GM12878 (cell line): ENCODE measurements at regions of chr18 and their contacts with region 1.

Region 1: GRCh38 chr18:50117863-50118262 is 77.1 kb downstream of the MYO5B start:
- DNase-seq: no peak
- ATAC-seq: no peak
- H3K4me3 ChIP-seq: no peak overlapping the region
- H3K27ac ChIP-seq: no peak overlapping the region
- H3K4me1 ChIP-seq: no peaks in the 10 kb centered on the region
- H3K27me3 ChIP-seq: peaks cover 0 to 4% of the 10 kb centered on the region in 2 experiments; a peak in 2 of 4 replicates
- CTCF ChIP-seq: no peak
- EP300 ChIP-seq: no peak
- POLR2A ChIP-seq: no peak
- RAD21 ChIP-seq: no peak

Region 2: DNA sequence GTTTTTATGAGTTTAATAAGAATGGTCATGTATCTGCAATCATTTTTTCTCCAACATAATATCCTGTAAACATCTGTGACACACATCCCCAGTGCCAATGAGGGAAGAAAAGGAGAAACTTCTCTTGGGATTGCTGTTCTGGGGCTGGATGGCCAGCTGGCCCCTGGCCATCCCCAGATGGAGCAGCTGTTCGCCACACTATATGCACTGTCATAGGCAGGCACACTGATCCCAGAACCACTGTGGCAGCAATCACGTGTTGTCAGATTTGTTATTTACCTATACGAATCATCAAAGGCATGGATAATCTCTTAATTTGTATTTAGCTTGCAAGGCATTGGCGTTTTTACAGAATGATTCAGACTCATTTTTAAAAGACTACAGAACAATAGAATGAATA is 137.0 kb before region 1 on chr18:
- CTCF ChIA-PET with region 1: no interaction called
- POLR2A ChIA-PET with region 1: no interaction called
- RAD21 ChIA-PET with region 1: no interaction called
- SMC1A ChIA-PET with region 1: no interaction called
- in situ Hi-C with region 1: no loop called
- intact Hi-C with region 1: no loop called
- DNase-seq: no peak
- ATAC-seq: no peak
- H3K4me3 ChIP-seq: no peak overlapping the region
- H3K27ac ChIP-seq: no peak overlapping the region
- H3K4me1 ChIP-seq: no peaks in the 10 kb centered on the region
- H3K27me3 ChIP-seq: peaks cover 4 to 7% of the 10 kb centered on the region in 2 experiments; a peak in 3 of 4 replicates
- CTCF ChIP-seq: no peak
- EP300 ChIP-seq: no peak
- POLR2A ChIP-seq: no peak
- RAD21 ChIP-seq: no peak

Region 3: GRCh38 chr18:50099725-50100407 is 18.0 kb before region 1 on chr18:
- CTCF ChIA-PET with region 1: interaction called, 5 read pairs
- POLR2A ChIA-PET with region 1: interaction called, 10 read pairs
- RAD21 ChIA-PET with region 1: interaction called, 5 read pairs
- SMC1A ChIA-PET with region 1: interaction called, 7 read pairs
- in situ Hi-C with region 1: no loop called
- intact Hi-C with region 1: no loop called
- DNase-seq: peak; percentile 36
- ATAC-seq: peak; percentile 72
- H3K4me3 ChIP-seq: no peak overlapping the region
- H3K27ac ChIP-seq: no peak overlapping the region
- H3K4me1 ChIP-seq: peaks cover 6% of the 10 kb centered on the region
- H3K27me3 ChIP-seq: peaks cover 0 to 2% of the 10 kb centered on the region in 2 experiments; a peak in 2 of 4 replicates
- CTCF ChIP-seq: no peak
- EP300 ChIP-seq: peak; percentile 47 to 64; a peak in 2 of 4 replicates
- POLR2A ChIP-seq: no peak
- RAD21 ChIP-seq: no peak